ENCODE measurements at regions of chr12 and their contacts with region 1.

Region 1: GRCh38 chr12:53675651-53676453 is at the start of gene ATP5MC2:
- DNase-seq: peak; percentile 98 to 99 (median 99)
- H3K4me3 ChIP-seq: peak within 1 kb of the TSS; percentile 75 to 96 (median 89)
- H3K27ac ChIP-seq: peak within 1 kb of the TSS; percentile 75 to 91
- H3K4me1 ChIP-seq: peaks cover 3 to 33% (median 23%) of the 10 kb centered on the region in 4 experiments
- H3K27me3 ChIP-seq: peaks cover 0 to 21% (median 5%) of the 10 kb centered on the region in 5 experiments

Region 2: GRCh38 chr12:53591301-53592206 is 84.3 kb before region 1 on chr12:
- CTCF ChIA-PET with region 1: interaction called, 10 read pairs
- POLR2A ChIA-PET with region 1: interaction called, 3 read pairs
- DNase-seq: no peak
- H3K4me3 ChIP-seq: no peak overlapping the region
- H3K27ac ChIP-seq: no peak overlapping the region
- H3K4me1 ChIP-seq: peaks cover 0 to 17% (median 6%) of the 10 kb centered on the region in 4 experiments
- H3K27me3 ChIP-seq: no peaks in the 10 kb centered on the region

Region 3: DNA sequence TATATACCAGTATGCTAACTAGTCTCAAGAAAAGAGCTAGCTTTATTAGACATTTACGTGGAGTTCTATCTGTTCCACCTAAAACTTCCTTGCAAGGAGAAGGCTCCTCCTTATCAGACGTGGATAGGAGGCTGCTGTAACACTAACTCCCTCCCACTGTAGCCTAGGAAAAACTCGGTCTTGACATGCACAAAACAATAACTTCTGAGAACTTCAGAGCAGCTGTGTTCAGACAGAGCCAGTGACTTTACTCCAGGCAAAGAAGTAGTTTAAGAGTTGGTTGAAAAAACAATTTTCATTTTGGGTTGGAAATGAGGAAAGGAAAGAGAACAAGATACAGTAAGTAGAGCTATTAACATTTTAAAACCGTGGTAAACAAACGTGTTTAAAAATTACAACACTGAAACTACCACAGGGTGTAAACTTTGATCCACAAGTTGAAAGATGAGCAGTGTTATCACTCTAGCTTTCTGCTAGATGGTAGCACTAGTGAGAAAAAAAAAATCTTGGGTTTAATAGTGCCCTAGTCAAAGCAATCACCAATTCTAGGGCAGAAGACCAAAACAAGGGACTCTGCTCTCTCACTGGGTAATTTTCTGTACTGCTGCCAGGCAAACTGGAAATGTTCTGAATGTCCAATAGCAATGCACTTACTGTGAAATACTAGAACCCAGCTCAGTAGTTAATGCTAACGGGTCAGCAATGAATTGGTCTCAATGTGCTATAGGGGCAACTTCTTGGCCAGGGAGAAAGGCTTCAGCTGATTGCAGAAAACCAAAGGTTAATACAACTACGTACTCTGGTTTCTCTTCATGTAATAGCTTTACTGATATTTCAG is 52.1 kb before region 1 on chr12:
- CTCF ChIA-PET with region 1: interaction called, 10 read pairs
- POLR2A ChIA-PET with region 1: interaction called, 5 read pairs
- DNase-seq: no peak
- H3K4me3 ChIP-seq: peak overlapping the region in 5 of 7 experiments; percentile 7 to 96 (median 91)
- H3K27ac ChIP-seq: peak overlapping the region; percentile 34 to 99
- H3K4me1 ChIP-seq: peaks cover 36 to 55% (median 46%) of the 10 kb centered on the region in 4 experiments
- H3K27me3 ChIP-seq: no peaks in the 10 kb centered on the region

Measured in common myeloid progenitor, CD34-positive (primary cell).